ENCODE measurements at regions of chr10 and their contacts with region 1.

Region 1: GRCh38 chr10:97318772-97319651 is at the start of gene FRAT1:
- DNase-seq: peak; percentile 87
- H3K4me3 Mint-ChIP-seq: peak within 1 kb of the TSS; percentile 80
- H3K27ac Mint-ChIP-seq: peak within 1 kb of the TSS; percentile 99
- H3K4me1 Mint-ChIP-seq: peaks cover 8% of the 10 kb centered on the region
- H3K27me3 Mint-ChIP-seq: no peaks in the 10 kb centered on the region
- CTCF ChIP-seq: no peak
- total RNA-seq, gene FRAT1: 1.9 and 2.1 TPM in 2 replicates

Region 2: GRCh38 chr10:97117372-97117771 is 201.6 kb before region 1 on chr10:
- CTCF ChIA-PET with region 1: no interaction called
- POLR2A ChIA-PET with region 1: no interaction called
- intact Hi-C with region 1: no loop called
- DNase-seq: peak; percentile 37
- H3K4me3 Mint-ChIP-seq: no peak overlapping the region
- H3K27ac Mint-ChIP-seq: no peak overlapping the region
- H3K4me1 Mint-ChIP-seq: no peaks in the 10 kb centered on the region
- H3K27me3 Mint-ChIP-seq: peaks cover 58% of the 10 kb centered on the region
- CTCF ChIP-seq: peak; percentile 18

Region 3: DNA sequence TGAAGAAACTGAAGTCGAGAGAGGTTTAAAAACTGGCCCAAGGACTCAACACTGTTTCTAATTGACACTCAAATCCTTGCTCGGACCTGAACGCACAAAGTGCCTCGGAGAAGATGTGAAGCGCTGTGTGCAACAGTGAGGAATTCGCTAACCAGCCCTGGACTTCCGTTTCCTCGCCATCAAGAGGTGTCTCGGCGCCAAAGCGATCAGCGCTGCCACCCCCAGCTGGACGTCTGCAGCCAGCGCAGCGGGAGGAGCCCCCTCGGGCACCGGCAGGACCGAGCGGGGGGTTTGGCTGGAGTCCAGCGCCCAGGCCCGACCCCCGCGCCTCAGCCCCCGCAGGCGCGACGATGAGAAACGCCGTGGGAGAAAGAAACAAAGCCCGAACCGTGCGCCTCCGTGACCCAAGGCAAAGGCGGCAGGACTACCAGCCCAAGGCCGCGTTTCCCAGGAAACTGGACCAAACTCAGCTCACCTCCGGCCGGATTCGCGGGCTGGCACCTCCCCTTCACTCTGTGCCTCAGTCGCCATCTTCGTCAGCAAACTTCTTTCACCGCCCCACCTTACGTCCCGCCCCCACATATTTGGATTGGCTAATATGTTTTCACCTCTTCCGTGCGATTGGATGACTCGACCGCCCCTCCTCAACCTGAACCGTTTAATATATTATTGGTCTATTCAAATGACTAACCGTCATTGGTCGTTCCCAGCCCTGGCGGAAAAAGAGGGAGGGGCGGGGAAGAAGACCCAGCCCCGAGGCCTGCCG is 26.7 kb before region 1 on chr10 and contains the start of gene ARHGAP19:
- CTCF ChIA-PET with region 1: interaction called, 4 read pairs
- POLR2A ChIA-PET with region 1: interaction called, 33 read pairs
- intact Hi-C with region 1: loop called (anchors 1 kb)
- DNase-seq: peak; percentile 99
- H3K4me3 Mint-ChIP-seq: peak within 1 kb of the TSS; percentile 87
- H3K27ac Mint-ChIP-seq: peak within 1 kb of the TSS; percentile 88
- H3K4me1 Mint-ChIP-seq: peaks cover 4% of the 10 kb centered on the region
- H3K27me3 Mint-ChIP-seq: no peaks in the 10 kb centered on the region
- CTCF ChIP-seq: no peak
- total RNA-seq, gene ARHGAP19: 10.6 and 11.7 TPM in 2 replicates

Region 4: GRCh38 chr10:97572214-97572989 is 253.4 kb after region 1 on chr10 and contains the start of gene ANKRD2:
- CTCF ChIA-PET with region 1: no interaction called
- POLR2A ChIA-PET with region 1: no interaction called
- intact Hi-C with region 1: no loop called
- DNase-seq: peak; percentile 89
- H3K4me3 Mint-ChIP-seq: peak within 1 kb of the TSS; percentile 50
- H3K27ac Mint-ChIP-seq: peak within 1 kb of the TSS; percentile 57
- H3K4me1 Mint-ChIP-seq: peaks cover 40% of the 10 kb centered on the region
- H3K27me3 Mint-ChIP-seq: no peaks in the 10 kb centered on the region
- CTCF ChIP-seq: peak; percentile 91
- total RNA-seq, gene ANKRD2: 1.8 and 5.8 TPM in 2 replicates